ENCODE measurements at regions of chr18 and their contacts with region 1.

Region 1: GRCh38 chr18:63578357-63578958 is 8.7 kb upstream of the SERPINB13 start:
- DNase-seq: peak; percentile 41
- ATAC-seq: peak; percentile 90
- H3K4me3 ChIP-seq: no peak overlapping the region
- H3K27ac ChIP-seq: no peak overlapping the region
- H3K4me1 ChIP-seq: no peaks in the 10 kb centered on the region
- H3K27me3 ChIP-seq: no peaks in the 10 kb centered on the region
- CTCF ChIP-seq: peak; percentile 70 to 82 (median 81); a peak in 5 of 6 replicates
- POLR2A ChIP-seq: no peak
- RAD21 ChIP-seq: peak; percentile 84

Region 2: GRCh38 chr18:63025251-63026090 is 553.0 kb before region 1 on chr18:
- CTCF ChIA-PET with region 1: no interaction called
- POLR2A ChIA-PET with region 1: no interaction called
- RAD21 ChIA-PET with region 1: no interaction called
- intact Hi-C with region 1: loop called (anchors 10 kb)
- DNase-seq: no peak
- ATAC-seq: peak; percentile 84
- H3K4me3 ChIP-seq: no peak overlapping the region
- H3K27ac ChIP-seq: no peak overlapping the region
- H3K4me1 ChIP-seq: no peaks in the 10 kb centered on the region
- H3K27me3 ChIP-seq: no peaks in the 10 kb centered on the region
- CTCF ChIP-seq: peak; percentile 38 to 56 (median 54); a peak in 5 of 6 replicates
- POLR2A ChIP-seq: no peak
- RAD21 ChIP-seq: peak; percentile 70

Region 3: DNA sequence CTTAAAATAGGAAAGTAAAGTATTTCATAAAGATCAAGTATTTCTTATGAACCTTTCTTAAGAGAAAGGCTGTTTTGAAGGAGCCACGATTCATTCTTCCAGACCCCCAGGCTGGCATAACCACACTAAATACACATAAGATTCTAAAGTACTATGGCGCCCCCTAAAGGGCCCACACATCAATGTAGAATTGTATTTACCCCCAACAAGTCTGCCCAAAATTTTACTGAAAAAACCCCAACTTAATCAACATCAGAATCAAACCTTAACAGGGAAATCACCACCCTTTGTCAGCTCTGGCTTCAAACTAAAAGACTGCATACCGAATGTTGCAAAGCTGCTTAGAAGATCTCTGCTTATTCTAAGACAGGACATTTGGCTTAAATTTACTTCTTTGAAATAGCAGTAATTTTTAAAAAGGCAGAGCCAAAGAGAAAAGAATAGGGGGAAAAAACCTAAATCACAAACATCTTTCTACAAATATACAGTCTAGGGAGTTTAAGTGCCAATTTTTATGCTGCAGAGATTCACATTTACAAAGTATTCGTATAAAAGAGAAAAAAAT is 238.5 kb before region 1 on chr18:
- CTCF ChIA-PET with region 1: no interaction called
- POLR2A ChIA-PET with region 1: no interaction called
- RAD21 ChIA-PET with region 1: no interaction called
- intact Hi-C with region 1: loop called (anchors 5 kb)
- DNase-seq: peak; percentile 10
- ATAC-seq: peak; percentile 57; the same call in 1 of the 2 replicates
- H3K4me3 ChIP-seq: no peak overlapping the region
- H3K27ac ChIP-seq: no peak overlapping the region
- H3K4me1 ChIP-seq: peaks cover 10 to 15% of the 10 kb centered on the region in 2 experiments
- H3K27me3 ChIP-seq: no peaks in the 10 kb centered on the region
- CTCF ChIP-seq: peak; percentile 29 to 78 (median 68); a peak in 5 of 6 replicates
- POLR2A ChIP-seq: no peak
- RAD21 ChIP-seq: peak; percentile 41; the same call in 1 of the 2 replicates

Region 4: DNA sequence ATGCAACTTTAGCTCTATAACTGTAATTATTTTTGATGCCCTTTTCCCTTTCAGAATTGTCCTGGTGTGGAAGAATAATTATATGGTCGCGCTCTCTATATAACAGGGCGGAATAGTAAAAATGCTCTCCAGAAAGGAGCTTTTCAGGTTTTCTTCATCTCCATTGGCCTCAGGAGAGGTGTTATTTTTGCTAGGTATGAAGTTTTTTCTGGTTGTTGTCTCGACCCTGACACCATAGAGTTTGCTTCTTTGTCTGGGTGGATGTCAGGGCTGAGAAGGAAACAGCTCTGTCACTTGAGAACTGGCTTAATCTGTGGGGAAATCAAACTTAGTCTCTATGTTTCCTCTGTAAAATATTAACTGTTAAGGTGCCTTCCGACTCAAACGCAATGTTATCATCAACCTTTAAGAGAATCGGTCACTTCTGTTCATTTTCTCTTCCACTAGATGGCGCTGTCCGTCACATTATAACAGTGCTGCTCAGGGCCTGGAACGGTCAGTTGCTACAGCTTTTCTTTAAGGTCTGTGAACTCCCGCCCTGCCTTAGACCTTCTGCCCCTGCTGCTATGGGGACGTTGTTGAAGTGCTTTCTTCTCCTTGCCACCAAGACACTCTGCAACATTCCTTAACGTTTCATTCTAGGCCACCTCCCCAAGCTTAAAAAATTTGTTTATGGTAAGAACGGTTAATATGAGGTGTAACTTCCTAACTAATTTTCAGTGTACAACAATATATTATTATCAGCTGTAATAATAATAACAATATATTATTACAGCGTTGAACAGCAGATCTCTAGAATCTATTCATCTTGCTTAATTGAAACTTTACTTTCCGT is 60.1 kb before region 1 on chr18:
- CTCF ChIA-PET with region 1: interaction called, 104 read pairs
- POLR2A ChIA-PET with region 1: no interaction called
- RAD21 ChIA-PET with region 1: interaction called, 5 to 6 read pairs
- intact Hi-C with region 1: loop called (anchors 1 kb)
- DNase-seq: peak; percentile 78
- ATAC-seq: peak; percentile 98
- H3K4me3 ChIP-seq: no peak overlapping the region
- H3K27ac ChIP-seq: no peak overlapping the region
- H3K4me1 ChIP-seq: no peaks in the 10 kb centered on the region
- H3K27me3 ChIP-seq: no peaks in the 10 kb centered on the region
- CTCF ChIP-seq: peak; percentile 50 to 76 (median 74); a peak in 5 of 6 replicates
- POLR2A ChIP-seq: no peak
- RAD21 ChIP-seq: peak; percentile 90

Region 5: DNA sequence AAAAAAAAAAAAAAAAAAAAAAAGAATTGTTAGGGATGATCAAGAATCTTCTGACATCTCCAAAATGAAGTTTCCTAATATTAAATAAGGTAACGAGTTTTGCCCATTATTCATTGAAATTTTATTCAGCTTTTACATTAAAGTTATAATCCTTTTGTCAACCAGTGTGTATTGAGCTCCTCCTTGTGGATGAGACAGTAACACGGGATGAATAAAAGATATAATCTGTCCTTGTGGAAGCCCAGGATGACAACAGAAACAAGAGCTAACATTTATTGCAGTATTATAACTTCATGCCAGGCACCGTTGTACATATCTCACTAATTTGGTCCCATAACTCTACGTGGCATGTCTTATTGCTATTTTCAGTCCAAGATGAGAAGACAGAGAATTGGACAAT is 163.3 kb after region 1 on chr18:
- CTCF ChIA-PET with region 1: interaction called, 20 read pairs
- POLR2A ChIA-PET with region 1: no interaction called
- RAD21 ChIA-PET with region 1: interaction called in 1 of 2 experiments, 3 read pairs
- intact Hi-C with region 1: no loop called
- DNase-seq: no peak
- ATAC-seq: no peak
- H3K4me3 ChIP-seq: no peak overlapping the region
- H3K27ac ChIP-seq: no peak overlapping the region
- H3K4me1 ChIP-seq: peaks cover 3 to 11% of the 10 kb centered on the region in 2 experiments; a peak in 3 of 4 replicates
- H3K27me3 ChIP-seq: no peaks in the 10 kb centered on the region
- CTCF ChIP-seq: peak; percentile 38 to 72 (median 51); a peak in 4 of 6 replicates
- POLR2A ChIP-seq: no peak
- RAD21 ChIP-seq: peak; percentile 78

Measured in HCT116 (cell line).